Left colon (tissue), 2 donors: ENCODE measurements at regions of chr4 and their contacts with region 1.

Region 1: DNA sequence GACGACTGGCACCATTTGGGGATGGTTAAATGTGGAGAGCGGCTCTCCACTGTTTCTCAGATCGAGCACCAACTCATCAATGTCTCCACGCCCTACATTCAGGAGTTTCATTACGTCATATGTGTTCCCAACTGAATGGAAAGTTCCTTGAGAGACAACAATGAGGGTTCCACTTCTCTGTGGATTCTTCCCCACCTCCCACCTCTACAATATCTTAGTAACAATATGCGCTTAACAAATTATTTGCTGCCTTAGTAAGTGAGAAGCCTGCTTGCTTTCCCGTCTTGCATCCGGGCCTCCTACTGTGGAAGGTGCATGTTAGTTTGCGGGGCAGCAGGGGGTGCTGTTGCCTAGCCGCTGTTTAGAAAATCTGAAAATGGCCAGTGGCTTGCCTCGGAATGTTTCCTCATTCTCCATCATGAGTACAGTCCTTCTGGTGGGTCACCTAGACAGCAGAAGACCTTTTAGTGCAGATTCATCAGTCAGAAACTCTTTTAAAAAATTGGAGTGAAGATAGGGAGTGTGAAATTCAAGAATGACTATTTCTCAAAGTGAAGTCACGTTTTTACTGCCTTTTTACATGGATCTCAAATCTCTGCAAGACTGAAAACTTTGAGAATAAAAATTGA is 55.7 kb downstream of the PHOX2B start:
- DNase-seq: peak in 1 of 2 donors; percentile 44
- ATAC-seq: peak; percentile 91

Region 2: GRCh38 chr4:41465146-41465761 is 227.6 kb before region 1 on chr4:
- intact Hi-C with region 1: no loop called
- DNase-seq: no peak
- ATAC-seq: no peak

Region 3: GRCh38 chr4:41882625-41883347 is 190.0 kb after region 1 on chr4:
- intact Hi-C with region 1: loop called (anchors 2 to 10 kb)
- DNase-seq: peak in 1 of 2 donors; percentile 40
- ATAC-seq: peak; percentile 82